ENCODE measurements at regions of chr16 and their contacts with region 1.

Region 1: DNA sequence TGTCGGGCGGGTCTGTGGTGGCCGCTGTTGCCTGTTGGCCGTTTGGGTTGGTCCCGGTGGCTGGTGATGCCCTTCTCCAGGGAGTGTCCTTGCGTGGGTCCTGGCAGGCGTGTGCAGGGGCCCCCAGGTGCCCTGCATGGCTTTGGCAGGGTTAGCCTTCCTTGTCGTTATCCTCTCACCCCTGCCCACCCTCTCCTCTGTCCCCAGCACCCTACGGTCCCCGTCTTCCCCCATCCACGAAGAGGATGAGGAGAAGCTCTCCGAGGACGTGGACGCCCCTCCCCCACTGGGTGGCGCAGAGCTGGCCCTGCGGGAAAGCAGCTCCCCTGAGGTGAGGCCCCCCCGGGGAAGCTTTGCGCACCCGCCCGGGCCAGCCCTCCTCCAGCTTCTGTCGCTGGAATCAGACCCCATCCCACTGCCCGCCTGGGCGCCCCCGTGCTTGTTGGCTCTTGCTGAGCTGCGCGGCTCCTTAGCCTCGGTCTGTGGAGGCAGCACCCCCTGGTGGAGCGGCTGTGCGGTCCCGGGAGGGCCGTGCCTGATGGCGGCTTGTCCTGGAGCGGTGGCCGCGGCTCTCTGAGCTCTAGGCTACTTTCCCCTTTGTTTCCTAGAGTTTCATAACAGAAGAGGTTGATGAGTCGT is 10.6 kb upstream of the NUDT16L1 start:
- DNase-seq: peak; percentile 49
- H3K4me3 Mint-ChIP-seq: no peak overlapping the region
- H3K27ac Mint-ChIP-seq: no peak overlapping the region
- H3K4me1 Mint-ChIP-seq: peaks cover 15% of the 10 kb centered on the region
- H3K27me3 Mint-ChIP-seq: no peaks in the 10 kb centered on the region
- CTCF ChIP-seq: peak; percentile 20

Region 2: GRCh38 chr16:4616047-4616811 is 66.5 kb before region 1 on chr16:
- CTCF ChIA-PET with region 1: interaction called, 4 read pairs
- POLR2A ChIA-PET with region 1: interaction called, 14 read pairs
- intact Hi-C with region 1: no loop called
- DNase-seq: peak; percentile 100
- H3K4me3 Mint-ChIP-seq: peak overlapping the region; percentile 85
- H3K27ac Mint-ChIP-seq: peak overlapping the region; percentile 98
- H3K4me1 Mint-ChIP-seq: peaks cover 18% of the 10 kb centered on the region
- H3K27me3 Mint-ChIP-seq: no peaks in the 10 kb centered on the region
- CTCF ChIP-seq: peak; percentile 33

Region 3: DNA sequence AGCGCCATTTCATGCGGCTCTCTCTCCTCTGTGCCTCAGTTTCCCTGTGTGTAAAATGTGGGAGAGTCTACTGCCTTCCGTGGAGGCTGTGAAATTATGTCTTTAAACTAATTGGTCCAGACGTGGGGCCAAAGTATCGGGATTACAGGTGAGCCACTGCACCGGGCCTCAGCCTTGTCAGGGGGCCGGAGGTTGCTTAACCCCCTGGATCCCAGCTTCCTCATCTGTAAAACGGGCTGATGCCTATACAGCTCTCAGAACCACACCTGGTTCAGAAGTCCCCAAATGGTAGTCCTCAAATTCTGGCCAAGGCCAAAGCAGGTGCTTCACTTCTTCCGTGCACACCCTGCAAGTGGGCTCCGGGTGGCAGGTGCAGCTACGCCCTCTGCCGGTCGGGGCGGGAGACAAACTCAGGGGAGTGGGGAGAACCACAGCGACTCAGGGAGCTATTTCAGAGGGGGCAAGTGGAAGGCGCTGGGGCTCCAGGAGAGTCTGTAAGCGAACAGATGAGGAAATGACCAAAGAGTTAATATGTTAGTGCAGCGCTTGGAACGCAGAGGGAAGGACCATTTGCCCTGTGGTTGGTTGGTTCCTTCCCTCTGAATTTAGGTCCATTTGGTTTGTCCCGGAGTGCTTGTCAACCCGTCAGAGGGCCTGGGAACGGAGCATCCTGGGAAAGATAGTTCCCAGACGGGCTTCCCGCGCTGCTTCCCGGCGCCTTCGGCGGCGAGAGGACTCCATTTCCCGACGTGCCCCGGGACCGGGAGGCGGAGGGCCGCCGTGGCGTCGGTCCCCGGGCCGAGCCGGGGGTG is 58.5 kb before region 1 on chr16 and contains the start of gene MGRN1:
- CTCF ChIA-PET with region 1: interaction called, 18 read pairs
- POLR2A ChIA-PET with region 1: interaction called, 18 read pairs
- intact Hi-C with region 1: no loop called
- DNase-seq: peak; percentile 97
- H3K4me3 Mint-ChIP-seq: peak within 1 kb of the TSS; percentile 99
- H3K27ac Mint-ChIP-seq: peak within 1 kb of the TSS; percentile 99
- H3K4me1 Mint-ChIP-seq: peaks cover 13% of the 10 kb centered on the region
- H3K27me3 Mint-ChIP-seq: no peaks in the 10 kb centered on the region
- CTCF ChIP-seq: peak; percentile 89
- total RNA-seq, gene MGRN1: 61.3 and 62.9 TPM in 2 replicates

Region 4: GRCh38 chr16:4664538-4665418 is 18.0 kb before region 1 on chr16:
- CTCF ChIA-PET with region 1: no interaction called
- POLR2A ChIA-PET with region 1: interaction called, 16 read pairs
- intact Hi-C with region 1: no loop called
- DNase-seq: peak; percentile 43
- H3K4me3 Mint-ChIP-seq: no peak overlapping the region
- H3K27ac Mint-ChIP-seq: no peak overlapping the region
- H3K4me1 Mint-ChIP-seq: peaks cover 13% of the 10 kb centered on the region
- H3K27me3 Mint-ChIP-seq: no peaks in the 10 kb centered on the region
- CTCF ChIP-seq: no peak

Region 5: GRCh38 chr16:4693296-4693955 is 10.7 kb after region 1 on chr16 and contains the start of gene NUDT16L1:
- CTCF ChIA-PET with region 1: interaction called, 7 read pairs
- POLR2A ChIA-PET with region 1: interaction called, 30 read pairs
- intact Hi-C with region 1: no loop called
- DNase-seq: peak; percentile 94
- H3K4me3 Mint-ChIP-seq: peak within 1 kb of the TSS; percentile 75
- H3K27ac Mint-ChIP-seq: peak within 1 kb of the TSS; percentile 66
- H3K4me1 Mint-ChIP-seq: peaks cover 5% of the 10 kb centered on the region
- H3K27me3 Mint-ChIP-seq: no peaks in the 10 kb centered on the region
- CTCF ChIP-seq: no peak
- total RNA-seq, gene NUDT16L1: 18.3 and 21.8 TPM in 2 replicates

Region 6: DNA sequence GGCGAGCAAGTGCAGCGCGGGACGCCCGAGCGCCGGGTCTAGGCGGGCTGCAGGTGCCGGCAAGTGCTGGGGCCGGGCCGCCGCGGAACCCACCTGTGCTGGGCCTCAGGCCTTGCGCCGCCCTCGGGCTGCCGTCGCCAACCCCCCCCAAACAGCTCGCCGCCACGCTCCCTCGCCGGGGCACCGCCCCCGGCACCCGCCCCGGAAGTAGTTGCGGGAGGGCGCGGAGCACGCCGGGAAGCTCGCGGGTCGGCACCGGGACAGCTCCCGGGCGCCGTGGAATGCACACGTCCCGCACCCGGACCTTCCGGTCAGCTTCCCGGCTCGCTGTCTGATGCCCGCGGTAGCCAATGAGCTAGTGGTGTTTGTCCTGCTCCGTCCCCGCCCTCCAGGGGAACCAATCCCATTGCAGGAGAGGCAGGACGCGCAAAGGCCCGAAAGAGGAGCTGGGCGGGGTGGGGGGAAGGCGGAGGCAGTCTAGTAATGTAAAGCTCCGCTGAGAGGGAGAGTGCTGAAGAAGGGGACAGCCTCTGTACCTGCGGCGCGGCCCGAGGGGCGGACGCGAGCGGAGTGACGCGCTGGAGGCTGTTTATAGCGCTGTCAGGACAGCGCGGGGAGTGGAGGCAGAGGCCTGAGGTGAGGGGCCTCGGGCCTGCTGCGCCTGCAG is 51.5 kb after region 1 on chr16 and contains the starts of genes ANKS3 and DNAAF8:
- CTCF ChIA-PET with region 1: interaction called, 4 read pairs
- POLR2A ChIA-PET with region 1: interaction called, 14 read pairs
- intact Hi-C with region 1: no loop called
- DNase-seq: peak; percentile 98
- H3K4me3 Mint-ChIP-seq: peak within 1 kb of the TSS; percentile 98
- H3K27ac Mint-ChIP-seq: peak within 1 kb of the TSS; percentile 98
- H3K4me1 Mint-ChIP-seq: peaks cover 13% of the 10 kb centered on the region
- H3K27me3 Mint-ChIP-seq: no peaks in the 10 kb centered on the region
- CTCF ChIP-seq: no peak
- total RNA-seq, gene ANKS3: 29.9 and 35.0 TPM in 2 replicates
- total RNA-seq, gene DNAAF8: 0.56 and 1.6 TPM in 2 replicates

Measured in MCF 10A (cell line).